H1 (cell line): ENCODE measurements at regions of chr1 and their contacts with region 1.

Region 1: DNA sequence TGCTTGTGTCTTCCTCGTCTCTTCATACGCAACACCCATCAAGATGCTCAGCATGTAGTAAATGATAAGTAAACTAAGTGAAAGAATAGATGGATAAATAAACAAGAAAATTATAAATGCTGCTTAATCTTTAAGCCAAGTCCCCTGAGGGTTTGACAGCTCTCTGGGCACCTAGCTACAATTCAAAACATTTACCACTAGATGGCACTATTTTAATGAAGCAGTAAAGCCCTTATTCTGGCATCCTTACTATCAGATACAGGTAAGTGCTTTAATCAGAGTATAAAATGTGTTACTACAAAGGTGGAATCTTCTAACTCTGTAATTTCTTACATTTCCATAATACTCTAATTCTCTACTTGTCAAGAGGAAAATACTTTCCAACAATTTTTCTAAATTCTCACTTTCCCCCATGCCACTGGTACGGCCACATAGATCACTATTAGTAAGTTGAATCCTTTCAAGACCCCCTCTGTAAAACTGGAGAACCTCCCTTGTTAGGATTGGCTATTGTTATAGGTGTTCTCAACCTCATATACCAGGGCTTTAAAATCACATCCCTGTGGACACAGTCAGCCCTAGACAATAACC is 137.8 kb downstream of the BARHL2 start:
- DNase-seq: no peak
- H3K4me3 ChIP-seq: no peak overlapping the region
- H3K27ac ChIP-seq: no peak overlapping the region
- H3K4me1 ChIP-seq: no peaks in the 10 kb centered on the region
- H3K27me3 ChIP-seq: no peaks in the 10 kb centered on the region
- CTCF ChIP-seq: peak in 2 of 3 experiments; percentile 42 to 60; a peak in 2 of 4 replicates
- EP300 ChIP-seq: no peak
- POLR2A ChIP-seq: no peak
- RAD21 ChIP-seq: peak; percentile 47 to 53

Region 2: DNA sequence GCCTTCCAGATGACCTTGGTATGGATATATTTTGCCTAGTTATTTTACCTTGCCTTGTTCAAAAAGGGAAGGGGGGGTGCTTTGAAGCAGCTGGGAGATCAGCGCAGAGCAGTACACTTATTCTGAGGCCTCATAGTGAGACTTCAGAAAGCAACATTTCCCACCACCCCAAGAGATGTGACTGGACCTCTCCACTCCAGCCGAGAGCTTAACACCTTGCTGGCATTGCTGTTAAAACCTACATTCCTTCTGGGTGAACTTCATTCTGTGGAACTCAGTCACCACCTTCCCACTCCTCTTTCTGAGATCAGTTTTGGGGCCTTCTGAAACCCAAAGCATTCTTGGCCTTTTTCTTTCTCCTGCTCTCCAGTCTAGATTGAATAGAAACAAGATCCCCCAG is 10.9 kb before region 1 on chr1:
- CTCF ChIA-PET with region 1: interaction called, 49 read pairs
- POLR2A ChIA-PET with region 1: no interaction called
- DNase-seq: no peak
- H3K4me3 ChIP-seq: no peak overlapping the region
- H3K27ac ChIP-seq: no peak overlapping the region
- H3K4me1 ChIP-seq: peaks cover 0 to 2% (median under 1%) of the 10 kb centered on the region in 4 experiments; a peak in 1 of 7 replicates
- H3K27me3 ChIP-seq: peaks cover 0 to 4% (median 1%) of the 10 kb centered on the region in 4 experiments; a peak in 3 of 7 replicates
- CTCF ChIP-seq: no peak
- EP300 ChIP-seq: no peak
- POLR2A ChIP-seq: no peak
- RAD21 ChIP-seq: no peak

Region 3: GRCh38 chr1:90591970-90592356 is 12.7 kb after region 1 on chr1:
- CTCF ChIA-PET with region 1: interaction called, 22 read pairs
- POLR2A ChIA-PET with region 1: no interaction called
- DNase-seq: peak; percentile 41 to 72
- H3K4me3 ChIP-seq: no peak overlapping the region
- H3K27ac ChIP-seq: no peak overlapping the region
- H3K4me1 ChIP-seq: no peaks in the 10 kb centered on the region
- H3K27me3 ChIP-seq: no peaks in the 10 kb centered on the region
- CTCF ChIP-seq: peak; percentile 53 to 76 (median 75)
- EP300 ChIP-seq: no peak
- POLR2A ChIP-seq: no peak
- RAD21 ChIP-seq: peak; percentile 77 to 82